Tibial artery (tissue), 4 donors: ENCODE measurements at regions of chr10 and their contacts with region 1.

Region 1: GRCh38 chr10:57249615-57250281 is 888.7 kb upstream of the ZWINT start:
- DNase-seq: no peak
- H3K4me3 ChIP-seq: no peak overlapping the region
- H3K27ac ChIP-seq: no peak overlapping the region
- H3K4me1 ChIP-seq: no peaks in the 10 kb centered on the region
- H3K27me3 ChIP-seq: no peaks in the 10 kb centered on the region
- CTCF ChIP-seq: no peak

Region 2: DNA sequence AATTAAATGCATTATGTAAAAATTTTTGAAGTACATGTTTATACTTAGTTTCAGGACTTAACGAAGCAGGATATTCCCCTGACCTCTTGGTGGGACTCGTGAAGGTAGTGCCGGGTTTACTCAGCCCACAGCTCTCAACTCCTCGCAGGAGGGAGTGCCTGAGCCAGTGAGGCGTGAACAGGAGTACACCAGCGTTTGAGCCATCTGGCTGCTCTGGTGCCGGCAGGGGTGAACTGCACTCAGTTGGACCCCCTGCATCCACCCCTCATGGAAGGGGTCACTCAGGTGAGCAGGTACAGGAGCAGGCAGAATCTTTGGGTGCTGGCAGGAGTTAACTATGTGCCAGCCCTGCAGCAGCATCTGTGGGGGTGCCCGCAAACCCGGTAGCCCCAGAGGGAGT is 1823.6 kb before region 1 on chr10:
- intact Hi-C with region 1: loop called (anchors 5 kb)
- DNase-seq: no peak
- H3K4me3 ChIP-seq: no peak overlapping the region
- H3K27ac ChIP-seq: no peak overlapping the region
- H3K4me1 ChIP-seq: no peaks in the 10 kb centered on the region
- H3K27me3 ChIP-seq: no peaks in the 10 kb centered on the region
- CTCF ChIP-seq: no peak

Region 3: DNA sequence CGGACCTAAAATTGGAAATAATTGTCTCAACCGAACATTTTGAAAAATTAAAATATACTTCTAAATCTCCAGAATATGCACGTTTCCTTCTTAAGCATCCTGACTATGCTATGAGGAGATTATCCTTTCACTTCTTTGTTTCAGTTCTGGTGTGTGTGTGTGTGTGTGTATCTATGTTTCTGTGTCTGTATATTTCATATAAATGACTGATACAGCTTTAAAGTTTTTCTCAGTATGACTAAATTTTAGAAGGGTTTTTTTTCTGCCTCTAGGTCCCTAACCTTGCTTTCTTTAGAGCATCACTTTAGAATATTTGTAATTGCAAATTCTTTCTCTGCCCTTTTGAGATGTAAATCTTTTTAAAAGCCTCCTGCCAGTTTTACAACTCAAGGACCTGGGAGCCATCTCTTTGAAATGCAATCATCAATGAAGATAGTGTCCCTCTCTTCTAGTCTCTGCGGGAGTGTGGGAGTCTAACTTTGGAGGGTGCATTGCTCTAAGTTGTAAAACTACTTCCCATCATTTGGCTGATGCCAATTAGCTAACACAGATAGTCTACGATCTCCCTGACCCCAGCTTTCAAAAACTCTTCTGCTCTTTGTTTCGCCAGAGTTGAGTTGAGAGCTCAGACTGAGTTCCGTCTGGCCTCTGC is 106.7 kb before region 1 on chr10:
- intact Hi-C with region 1: no loop called
- DNase-seq: no peak
- H3K4me3 ChIP-seq: no peak overlapping the region
- H3K27ac ChIP-seq: no peak overlapping the region
- H3K4me1 ChIP-seq: no peaks in the 10 kb centered on the region
- H3K27me3 ChIP-seq: no peaks in the 10 kb centered on the region
- CTCF ChIP-seq: no peak